Common myeloid progenitor, CD34-positive (primary cell): ENCODE measurements at regions of chr20 and their contacts with region 1.

Region 1: DNA sequence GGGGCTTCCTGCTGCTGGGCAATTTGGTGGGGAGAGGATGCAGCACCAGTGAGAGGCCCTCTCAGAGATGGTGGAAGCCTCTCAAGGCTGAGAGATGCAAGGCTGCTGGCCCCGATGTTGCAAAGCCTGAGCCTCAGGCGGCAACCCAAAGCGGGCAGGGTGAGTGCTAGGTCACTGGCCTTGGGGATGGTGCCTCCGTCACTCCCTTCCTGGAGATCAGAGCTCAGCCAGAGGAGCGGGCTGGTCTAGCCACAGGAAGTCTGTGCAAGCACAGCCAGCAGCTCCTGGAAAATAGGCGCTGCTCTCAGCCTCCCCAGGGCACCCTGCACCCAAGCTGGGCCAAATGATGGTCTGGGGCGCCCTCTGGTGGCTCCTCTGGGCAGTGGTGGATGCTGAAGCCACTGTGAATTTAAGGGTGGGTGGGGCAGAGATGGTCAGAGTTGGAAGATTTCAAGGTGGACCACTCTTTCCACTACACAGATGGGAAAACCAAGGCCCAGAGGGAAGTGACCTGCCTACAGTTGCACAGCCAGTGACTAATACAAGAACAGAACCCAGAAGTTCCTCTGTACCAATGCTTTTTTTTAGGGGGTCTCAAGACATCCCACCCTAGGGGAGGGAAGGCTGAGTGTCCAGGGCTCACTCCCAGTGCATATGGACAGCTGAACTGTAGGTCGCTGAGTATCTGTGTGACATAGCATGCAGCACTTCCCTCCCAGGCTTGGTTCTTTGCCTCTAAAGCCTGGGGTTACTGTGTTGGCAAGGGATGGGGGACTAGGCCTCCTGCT is 20.8 kb downstream of the C20orf203 start:
- DNase-seq: peak; percentile 69 to 84 (median 80)
- H3K4me3 ChIP-seq: peak overlapping the region in 3 of 7 experiments; percentile 23 to 38 (median 33)
- H3K27ac ChIP-seq: no peak overlapping the region
- H3K4me1 ChIP-seq: peaks cover 3 to 55% (median 39%) of the 10 kb centered on the region in 4 experiments
- H3K27me3 ChIP-seq: no peaks in the 10 kb centered on the region

Region 2: DNA sequence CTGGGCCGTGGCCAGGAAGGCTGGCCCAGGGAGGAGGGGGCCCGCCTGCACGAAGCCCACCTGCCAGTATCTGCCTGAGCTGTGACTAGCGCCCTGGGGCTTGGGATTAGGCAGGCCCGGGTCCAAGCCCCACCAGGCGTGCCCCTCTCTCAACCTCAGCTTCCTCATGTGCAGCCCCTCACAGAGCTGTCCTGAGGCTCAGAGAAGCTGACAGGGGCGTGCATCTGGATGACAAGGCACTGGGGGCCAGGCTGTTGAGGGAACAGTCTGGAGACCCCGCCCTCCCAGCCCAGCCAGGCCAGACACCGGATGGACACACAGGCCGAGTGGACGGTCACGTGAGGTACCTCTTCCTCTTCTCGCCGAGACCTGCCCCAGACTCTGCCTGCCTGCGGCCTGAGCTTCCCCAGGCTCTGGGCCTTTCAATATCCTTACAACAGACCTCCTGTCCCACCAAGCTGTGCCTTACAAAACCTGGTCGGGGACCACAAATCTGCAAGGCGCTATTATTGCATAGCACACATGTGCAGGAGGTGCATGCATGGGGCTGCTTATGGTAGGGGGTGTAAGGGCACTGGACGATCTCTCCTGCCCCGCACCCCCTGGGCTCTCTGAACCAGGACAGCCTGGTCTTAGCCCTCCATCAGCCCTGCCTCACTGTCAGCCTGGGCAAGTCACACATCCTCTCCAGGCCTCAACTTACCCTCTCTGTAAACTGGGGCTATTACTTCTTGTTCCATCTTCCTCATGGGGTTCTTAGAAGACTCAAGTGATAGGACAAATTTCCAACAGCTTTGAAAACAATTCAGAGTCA is 87.8 kb before region 1 on chr20:
- CTCF ChIA-PET with region 1: interaction called, 19 read pairs
- POLR2A ChIA-PET with region 1: interaction called, 3 read pairs
- DNase-seq: peak in 2 of 3 donors; percentile 76 to 84
- H3K4me3 ChIP-seq: no peak overlapping the region
- H3K27ac ChIP-seq: no peak overlapping the region
- H3K4me1 ChIP-seq: peaks cover 0 to 80% (median 51%) of the 10 kb centered on the region in 4 experiments
- H3K27me3 ChIP-seq: no peaks in the 10 kb centered on the region

Region 3: GRCh38 chr20:32585011-32585518 is 67.9 kb before region 1 on chr20 and contains the start of gene NOL4L:
- CTCF ChIA-PET with region 1: interaction called, 13 read pairs
- POLR2A ChIA-PET with region 1: no interaction called
- DNase-seq: peak in 1 of 3 donors; percentile 36
- H3K4me3 ChIP-seq: peak within 1 kb of the TSS; percentile 68 to 90 (median 84)
- H3K27ac ChIP-seq: no peak within 1 kb of the TSS
- H3K4me1 ChIP-seq: peaks cover 0 to 55% (median 43%) of the 10 kb centered on the region in 4 experiments
- H3K27me3 ChIP-seq: no peaks in the 10 kb centered on the region

Region 4: GRCh38 chr20:32626859-32627636 is 25.9 kb before region 1 on chr20:
- CTCF ChIA-PET with region 1: interaction called, 10 read pairs
- POLR2A ChIA-PET with region 1: no interaction called
- DNase-seq: peak; percentile 86 to 98 (median 96)
- H3K4me3 ChIP-seq: peak overlapping the region in 5 of 7 experiments; percentile 24 to 58 (median 55)
- H3K27ac ChIP-seq: peak overlapping the region in 1 of 2 experiments; percentile 69
- H3K4me1 ChIP-seq: peaks cover 0 to 53% (median 34%) of the 10 kb centered on the region in 4 experiments
- H3K27me3 ChIP-seq: no peaks in the 10 kb centered on the region

Region 5: DNA sequence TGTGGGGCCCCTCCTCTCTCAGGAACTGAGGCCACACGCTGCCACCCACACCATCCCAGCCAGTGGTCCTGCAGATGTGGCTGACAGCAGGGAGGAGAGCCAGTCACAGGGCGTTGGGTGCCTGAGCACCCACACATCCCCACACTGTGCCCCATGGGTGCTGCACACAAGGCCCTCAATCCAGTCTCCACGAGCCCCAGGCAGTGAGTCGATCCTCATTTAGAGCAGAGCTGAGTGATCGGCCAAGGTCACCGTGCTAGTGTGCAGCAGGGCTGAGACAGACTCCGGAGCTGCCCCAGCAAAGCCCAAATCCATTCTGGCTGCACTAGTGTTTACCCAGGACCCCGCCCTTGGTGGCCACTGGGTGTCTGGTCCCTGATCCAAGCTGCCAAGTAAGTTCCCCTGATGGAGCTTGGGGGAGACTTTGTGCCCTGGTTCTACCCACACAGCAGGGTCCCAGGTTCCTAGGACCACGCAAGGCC is 11.8 kb after region 1 on chr20:
- CTCF ChIA-PET with region 1: interaction called, 79 read pairs
- POLR2A ChIA-PET with region 1: no interaction called
- DNase-seq: peak in 2 of 3 donors; percentile 37 to 55
- H3K4me3 ChIP-seq: peak overlapping the region in 3 of 7 experiments; percentile 5 to 42 (median 7)
- H3K27ac ChIP-seq: peak overlapping the region in 1 of 2 experiments; percentile 76
- H3K4me1 ChIP-seq: peaks cover 0 to 63% (median 41%) of the 10 kb centered on the region in 4 experiments
- H3K27me3 ChIP-seq: no peaks in the 10 kb centered on the region

Region 6: DNA sequence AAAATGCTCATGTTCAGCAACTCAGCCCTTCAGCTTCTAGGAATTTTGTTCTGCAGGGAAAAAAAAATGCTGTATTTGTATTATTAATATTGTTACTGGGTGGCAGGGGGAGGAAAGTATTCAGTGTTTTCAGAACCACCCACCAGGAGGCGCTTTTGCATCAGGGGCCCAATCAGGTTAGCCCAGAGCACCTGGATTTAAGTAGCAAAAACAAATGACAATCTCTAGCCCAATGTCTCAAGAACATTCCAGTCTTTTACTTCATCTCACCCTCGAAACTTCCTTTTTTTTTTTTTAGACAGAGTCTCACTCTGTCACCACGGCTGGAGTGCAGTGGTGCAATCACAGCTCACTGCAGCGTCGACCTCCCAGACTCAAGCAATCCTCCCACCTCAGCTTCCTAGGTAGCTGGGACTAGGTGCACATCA is 21.4 kb after region 1 on chr20:
- CTCF ChIA-PET with region 1: interaction called, 28 read pairs
- POLR2A ChIA-PET with region 1: interaction called, 3 read pairs
- DNase-seq: peak; percentile 73 to 81 (median 81)
- H3K4me3 ChIP-seq: peak overlapping the region in 2 of 7 experiments; percentile 9 to 54
- H3K27ac ChIP-seq: peak overlapping the region in 1 of 2 experiments; percentile 86
- H3K4me1 ChIP-seq: peaks cover 17 to 93% (median 84%) of the 10 kb centered on the region in 4 experiments
- H3K27me3 ChIP-seq: no peaks in the 10 kb centered on the region

Region 7: DNA sequence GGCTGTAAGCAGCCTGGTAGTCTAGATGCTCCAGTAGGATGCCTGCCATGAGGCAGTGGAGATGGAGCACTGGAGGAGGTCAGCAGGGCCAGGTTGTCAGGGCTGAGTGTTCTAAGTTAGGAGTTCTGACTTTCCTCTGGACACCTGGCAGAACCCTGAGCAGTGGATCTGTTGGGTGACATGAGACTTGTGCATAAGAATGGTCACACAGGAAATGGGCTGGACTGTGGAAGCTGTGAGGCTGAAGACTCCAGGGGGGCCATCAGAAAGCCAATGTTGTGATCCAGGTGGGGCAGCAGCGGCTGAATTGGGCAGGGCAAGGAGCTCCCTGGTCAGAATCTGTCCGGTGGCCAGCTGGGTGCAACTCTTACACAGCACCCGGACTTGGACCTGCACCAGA is 44.7 kb after region 1 on chr20:
- CTCF ChIA-PET with region 1: no interaction called
- POLR2A ChIA-PET with region 1: no interaction called
- DNase-seq: no peak
- H3K4me3 ChIP-seq: no peak overlapping the region
- H3K27ac ChIP-seq: no peak overlapping the region
- H3K4me1 ChIP-seq: peaks cover 0 to 6% (median 0%) of the 10 kb centered on the region in 4 experiments
- H3K27me3 ChIP-seq: no peaks in the 10 kb centered on the region

Region 8: GRCh38 chr20:32743237-32744112 is 90.5 kb after region 1 on chr20 and contains the start of gene COMMD7:
- CTCF ChIA-PET with region 1: no interaction called
- POLR2A ChIA-PET with region 1: no interaction called
- DNase-seq: peak; percentile 74 to 85 (median 75)
- H3K4me3 ChIP-seq: peak within 1 kb of the TSS; percentile 45 to 96 (median 88)
- H3K27ac ChIP-seq: peak within 1 kb of the TSS; percentile 80 to 93
- H3K4me1 ChIP-seq: peaks cover 10 to 47% (median 32%) of the 10 kb centered on the region in 4 experiments
- H3K27me3 ChIP-seq: no peaks in the 10 kb centered on the region